Panc1 (cell line): ENCODE measurements at regions of chr6 and their contacts with region 1.

Region 1: DNA sequence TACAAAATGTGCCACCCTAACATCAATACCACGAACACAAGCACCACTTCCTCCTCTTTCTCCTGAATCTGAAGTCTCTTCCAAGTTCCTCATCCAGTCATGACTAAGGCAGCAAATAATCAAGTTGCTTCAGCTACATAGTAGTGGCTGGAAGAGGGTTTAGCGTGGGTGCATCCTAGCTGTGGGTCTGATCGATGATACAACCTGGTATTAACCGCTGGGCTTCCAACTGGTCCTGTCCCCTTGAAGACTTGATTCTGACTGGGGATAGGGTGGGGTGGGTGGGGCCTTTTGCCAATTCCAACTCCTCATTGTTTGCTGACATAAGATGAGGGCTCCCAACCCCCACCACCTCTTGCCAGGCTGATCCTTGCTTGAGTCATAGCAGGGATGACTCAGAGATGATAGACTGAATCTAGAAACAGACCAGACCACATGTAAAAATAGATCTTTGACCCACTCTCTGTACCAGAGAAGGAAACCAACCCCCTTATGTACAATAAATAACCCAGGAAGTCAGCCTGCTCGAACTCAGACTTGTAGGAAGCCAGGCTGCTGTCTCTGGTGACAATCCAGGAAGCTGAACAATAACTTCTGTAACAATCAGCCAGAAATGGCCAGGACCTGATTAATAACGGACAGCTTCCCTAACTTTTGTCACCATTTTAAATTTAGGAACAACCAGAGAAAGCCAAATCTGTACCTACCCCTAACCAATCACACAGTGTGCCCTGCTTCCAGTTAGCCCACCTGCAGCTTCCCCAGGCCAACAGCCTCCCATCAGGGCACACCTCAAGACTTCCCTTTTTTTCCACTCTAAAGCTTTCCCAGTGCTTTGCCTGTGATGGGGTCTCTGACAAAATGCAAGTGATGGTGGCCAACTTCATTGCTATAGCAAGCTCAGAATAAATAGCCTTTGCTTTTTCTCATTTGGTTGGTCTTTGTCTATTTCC is 68.9 kb upstream of the FAM184A start:
- DNase-seq: peak; percentile 94
- ATAC-seq: peak; percentile 85
- H3K4me3 ChIP-seq: peak overlapping the region in 1 of 2 experiments; percentile 16; a peak in 1 of 4 replicates
- H3K27ac ChIP-seq: peak overlapping the region; percentile 53; the same call in 1 of the 2 replicates
- H3K4me1 ChIP-seq: peaks cover 18% of the 10 kb centered on the region
- H3K27me3 ChIP-seq: no peaks in the 10 kb centered on the region
- CTCF ChIP-seq: no peak

Region 2: DNA sequence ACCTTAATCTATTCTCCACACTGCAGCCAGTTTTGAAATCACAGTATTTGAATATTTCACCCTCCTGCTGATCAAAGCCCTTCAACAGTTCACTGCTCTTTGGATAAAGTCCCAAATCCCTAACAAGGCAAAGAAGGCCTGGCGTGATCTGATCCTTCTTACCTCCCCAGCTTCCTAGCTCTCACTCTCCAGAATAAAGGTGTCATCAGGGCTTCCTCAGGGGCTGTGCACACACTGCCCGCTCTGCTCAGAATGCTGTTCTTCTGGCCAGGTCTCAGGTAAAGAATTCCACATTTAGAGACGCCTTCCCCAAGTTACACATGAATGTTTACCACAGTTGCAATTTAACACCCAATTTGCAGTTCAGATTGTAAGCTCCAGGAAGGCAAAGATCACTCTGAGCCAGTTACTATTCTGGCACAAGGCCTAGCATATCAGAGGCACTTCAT is 153.6 kb before region 1 on chr6:
- CTCF ChIA-PET with region 1: no interaction called
- POLR2A ChIA-PET with region 1: no interaction called
- in situ Hi-C with region 1: no loop called
- intact Hi-C with region 1: no loop called
- DNase-seq: no peak
- ATAC-seq: no peak
- H3K4me3 ChIP-seq: no peak overlapping the region
- H3K27ac ChIP-seq: no peak overlapping the region
- H3K4me1 ChIP-seq: no peaks in the 10 kb centered on the region
- H3K27me3 ChIP-seq: no peaks in the 10 kb centered on the region
- CTCF ChIP-seq: no peak

Region 3: GRCh38 chr6:119349323-119350042 is 202.1 kb after region 1 on chr6 and contains the start of gene MAN1A1:
- CTCF ChIA-PET with region 1: interaction called, 6 read pairs
- POLR2A ChIA-PET with region 1: no interaction called
- in situ Hi-C with region 1: no loop called
- intact Hi-C with region 1: loop called (anchors 5 kb)
- DNase-seq: no peak
- ATAC-seq: peak; percentile 91
- H3K4me3 ChIP-seq: peak within 1 kb of the TSS; percentile 56 to 65
- H3K27ac ChIP-seq: no peak within 1 kb of the TSS
- H3K4me1 ChIP-seq: peaks cover 11% of the 10 kb centered on the region
- H3K27me3 ChIP-seq: peaks cover 51% of the 10 kb centered on the region
- CTCF ChIP-seq: no peak
- total RNA-seq, gene MAN1A1: 3.2 TPM

Region 4: DNA sequence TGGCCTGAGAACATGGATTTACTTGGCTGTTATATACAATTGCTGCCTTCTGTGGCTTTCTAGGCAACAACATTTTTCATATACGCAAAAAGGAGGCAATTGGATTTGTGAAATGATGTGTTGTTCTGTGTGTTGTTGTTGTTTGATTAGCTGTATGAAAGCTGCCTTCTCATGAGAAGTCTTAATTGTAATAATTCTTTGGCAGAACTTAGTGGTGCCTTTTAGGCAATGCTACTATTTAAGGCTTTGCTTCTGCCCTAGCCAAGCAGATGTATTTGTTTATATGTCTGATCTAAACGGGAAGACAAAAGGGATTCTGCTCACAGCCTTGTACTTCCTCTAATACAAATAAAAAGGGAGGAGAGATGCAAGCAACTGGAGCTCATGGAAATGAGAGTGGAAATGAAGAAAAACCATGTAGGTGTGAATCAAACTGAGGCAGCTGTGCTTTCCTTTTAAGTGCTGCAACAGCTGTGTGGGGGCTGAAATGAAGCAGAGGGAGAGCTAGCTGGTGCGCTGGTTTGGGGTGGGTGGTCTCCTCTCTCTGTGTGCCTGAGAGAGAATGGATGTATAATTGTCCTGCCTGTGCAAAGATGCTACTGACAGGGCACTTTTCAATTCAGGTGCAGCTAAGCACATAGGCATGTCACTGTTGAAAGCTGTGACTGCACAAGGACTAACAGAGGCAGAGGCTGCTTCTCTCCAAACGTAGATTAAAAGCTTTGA is 589.1 kb after region 1 on chr6:
- CTCF ChIA-PET with region 1: no interaction called
- POLR2A ChIA-PET with region 1: no interaction called
- in situ Hi-C with region 1: no loop called
- intact Hi-C with region 1: loop called (anchors 10 kb)
- DNase-seq: no peak
- ATAC-seq: no peak
- H3K4me3 ChIP-seq: no peak overlapping the region
- H3K27ac ChIP-seq: no peak overlapping the region
- H3K4me1 ChIP-seq: no peaks in the 10 kb centered on the region
- H3K27me3 ChIP-seq: no peaks in the 10 kb centered on the region
- CTCF ChIP-seq: no peak

Region 5: GRCh38 chr6:120826253-120826652 is 1678.9 kb after region 1 on chr6:
- CTCF ChIA-PET with region 1: no interaction called
- POLR2A ChIA-PET with region 1: no interaction called
- in situ Hi-C with region 1: no loop called
- intact Hi-C with region 1: loop called (anchors 5 kb)
- DNase-seq: peak; percentile 22
- ATAC-seq: no peak
- H3K4me3 ChIP-seq: no peak overlapping the region
- H3K27ac ChIP-seq: no peak overlapping the region
- H3K4me1 ChIP-seq: no peaks in the 10 kb centered on the region
- H3K27me3 ChIP-seq: no peaks in the 10 kb centered on the region
- CTCF ChIP-seq: peak; percentile 73